Transverse colon (tissue), 4 donors: ENCODE measurements at regions of chr1 and their contacts with region 1.

Region 1: GRCh38 chr1:203340112-203340804 is 10.7 kb downstream of the FMOD start:
- DNase-seq: peak; percentile 79
- H3K4me3 ChIP-seq: no peak overlapping the region
- H3K27ac ChIP-seq: no peak overlapping the region
- H3K4me1 ChIP-seq: peaks cover 3 to 29% (median 11%) of the 10 kb centered on the region in 4 donors
- H3K27me3 ChIP-seq: no peaks in the 10 kb centered on the region
- CTCF ChIP-seq: peak; percentile 87 to 97 (median 88)
- EP300 ChIP-seq: no peak
- POLR2A ChIP-seq: no peak

Region 2: GRCh38 chr1:203316626-203317093 is 23.6 kb before region 1 on chr1:
- in situ Hi-C with region 1: no loop called
- intact Hi-C with region 1: loop called (anchors 1 kb)
- DNase-seq: peak; percentile 73
- H3K4me3 ChIP-seq: no peak overlapping the region
- H3K27ac ChIP-seq: peak overlapping the region; percentile 75 to 84 (median 78)
- H3K4me1 ChIP-seq: peaks cover 22 to 48% (median 35%) of the 10 kb centered on the region in 4 donors
- H3K27me3 ChIP-seq: no peaks in the 10 kb centered on the region
- CTCF ChIP-seq: no peak
- EP300 ChIP-seq: no peak
- POLR2A ChIP-seq: peak; percentile 15

Region 3: DNA sequence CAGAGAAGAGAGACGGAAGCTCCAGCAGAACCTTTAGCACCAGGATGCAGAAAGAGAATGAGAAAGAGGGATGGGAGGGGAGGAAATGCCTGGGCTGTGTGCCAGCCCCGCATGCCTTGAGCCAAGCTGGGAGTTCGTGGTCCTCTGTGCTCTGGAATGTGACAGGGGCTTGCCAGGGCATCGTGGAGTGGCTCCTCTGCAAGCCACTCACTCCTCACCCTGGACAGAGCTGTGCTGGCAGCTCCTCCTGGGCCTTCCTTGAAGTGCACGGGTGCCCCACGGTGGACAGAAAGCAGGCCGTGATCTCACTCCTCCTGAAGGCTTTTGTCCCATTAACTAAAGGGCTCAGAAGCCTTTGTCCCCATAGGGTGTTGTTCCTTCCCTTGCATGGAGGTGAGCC is 100.5 kb after region 1 on chr1:
- in situ Hi-C with region 1: loop called in 2 of 4 experiments (anchors 5 to 10 kb)
- intact Hi-C with region 1: loop called (anchors 2 kb)
- DNase-seq: peak; percentile 83
- H3K4me3 ChIP-seq: no peak overlapping the region
- H3K27ac ChIP-seq: peak overlapping the region; percentile 24 to 47 (median 26)
- H3K4me1 ChIP-seq: peaks cover 17 to 29% (median 19%) of the 10 kb centered on the region in 4 donors
- H3K27me3 ChIP-seq: no peaks in the 10 kb centered on the region
- CTCF ChIP-seq: peak; percentile 61 to 78 (median 71)
- EP300 ChIP-seq: no peak
- POLR2A ChIP-seq: no peak

Region 4: GRCh38 chr1:203480525-203481084 is 140.3 kb after region 1 on chr1:
- in situ Hi-C with region 1: loop called in 2 of 4 experiments (anchors 5 to 10 kb)
- intact Hi-C with region 1: no loop called
- DNase-seq: peak; percentile 91
- H3K4me3 ChIP-seq: no peak overlapping the region
- H3K27ac ChIP-seq: peak overlapping the region; percentile 75 to 89 (median 80)
- H3K4me1 ChIP-seq: peaks cover 9 to 34% (median 19%) of the 10 kb centered on the region in 4 donors
- H3K27me3 ChIP-seq: no peaks in the 10 kb centered on the region
- CTCF ChIP-seq: no peak
- EP300 ChIP-seq: no peak
- POLR2A ChIP-seq: no peak

Region 5: GRCh38 chr1:203486618-203487370 is 146.5 kb after region 1 on chr1:
- in situ Hi-C with region 1: loop called in 2 of 4 experiments (anchors 5 to 10 kb)
- intact Hi-C with region 1: loop called (anchors 2 kb)
- DNase-seq: no peak
- H3K4me3 ChIP-seq: peak overlapping the region in 2 of 4 donors; percentile 19 to 35
- H3K27ac ChIP-seq: peak overlapping the region; percentile 67 to 82 (median 73)
- H3K4me1 ChIP-seq: peaks cover 3 to 22% (median 4%) of the 10 kb centered on the region in 4 donors
- H3K27me3 ChIP-seq: no peaks in the 10 kb centered on the region
- CTCF ChIP-seq: no peak
- EP300 ChIP-seq: no peak
- POLR2A ChIP-seq: no peak

Region 6: DNA sequence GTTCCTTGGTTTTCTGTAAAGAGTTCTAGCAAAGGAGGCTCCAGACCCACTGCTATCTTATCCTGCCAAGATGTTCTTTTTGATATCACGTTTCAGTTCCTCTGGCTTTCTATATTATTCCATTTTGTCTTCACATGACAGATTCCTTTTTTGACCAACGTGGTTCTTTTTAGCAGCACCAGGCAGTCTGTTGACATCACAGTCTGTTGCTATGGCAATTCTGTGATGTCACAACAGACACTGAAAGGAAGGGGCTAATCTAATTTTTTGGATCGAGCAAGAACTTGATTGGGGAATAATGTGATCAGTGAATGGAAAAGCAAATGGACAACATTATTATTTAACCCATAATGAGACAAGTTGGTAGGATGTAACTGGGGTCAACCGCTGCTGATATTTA is 938.0 kb after region 1 on chr1:
- in situ Hi-C with region 1: no loop called
- intact Hi-C with region 1: no loop called
- DNase-seq: no peak
- H3K4me3 ChIP-seq: no peak overlapping the region
- H3K27ac ChIP-seq: peak overlapping the region in 1 of 4 donors; percentile 14
- H3K4me1 ChIP-seq: peaks cover 0 to 4% (median 0%) of the 10 kb centered on the region in 4 donors
- H3K27me3 ChIP-seq: no peaks in the 10 kb centered on the region
- CTCF ChIP-seq: no peak
- EP300 ChIP-seq: no peak
- POLR2A ChIP-seq: no peak